Calu3 (cell line): ENCODE measurements at regions of chr1 and their contacts with region 1.

Region 1: GRCh38 chr1:214123061-214123784 is 135.4 kb downstream of the PROX1 start:
- DNase-seq: peak; percentile 65
- H3K4me3 Mint-ChIP-seq: no peak overlapping the region
- H3K27ac Mint-ChIP-seq: no peak overlapping the region
- H3K4me1 Mint-ChIP-seq: peaks cover 12% of the 10 kb centered on the region
- H3K27me3 Mint-ChIP-seq: peaks cover 2% of the 10 kb centered on the region
- CTCF ChIP-seq: peak; percentile 42

Region 2: DNA sequence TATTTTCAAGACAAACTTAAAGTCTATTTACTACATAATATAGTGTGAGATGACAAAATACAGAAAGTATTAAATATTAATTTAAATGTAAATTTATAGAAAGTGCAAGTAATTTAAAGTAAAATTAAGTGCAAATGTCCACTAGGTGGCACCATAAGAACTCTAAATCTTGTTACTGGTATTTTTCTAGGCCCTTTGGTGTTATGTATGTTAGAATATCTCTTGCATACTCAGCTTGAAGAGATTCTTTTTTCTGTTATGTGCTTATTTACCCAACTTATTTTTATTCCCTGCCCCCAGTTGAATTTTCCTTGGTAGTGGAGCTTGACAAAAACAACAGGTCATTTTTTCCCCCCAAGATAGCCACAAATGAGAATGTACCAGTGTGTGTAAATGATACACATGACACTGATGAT is 1000.7 kb before region 1 on chr1:
- CTCF ChIA-PET with region 1: interaction called, 4 read pairs
- intact Hi-C with region 1: loop called (anchors 1 kb)
- DNase-seq: peak; percentile 20
- H3K4me3 Mint-ChIP-seq: no peak overlapping the region
- H3K27ac Mint-ChIP-seq: no peak overlapping the region
- H3K4me1 Mint-ChIP-seq: peaks cover 53% of the 10 kb centered on the region
- H3K27me3 Mint-ChIP-seq: no peaks in the 10 kb centered on the region
- CTCF ChIP-seq: peak; percentile 37

Region 3: DNA sequence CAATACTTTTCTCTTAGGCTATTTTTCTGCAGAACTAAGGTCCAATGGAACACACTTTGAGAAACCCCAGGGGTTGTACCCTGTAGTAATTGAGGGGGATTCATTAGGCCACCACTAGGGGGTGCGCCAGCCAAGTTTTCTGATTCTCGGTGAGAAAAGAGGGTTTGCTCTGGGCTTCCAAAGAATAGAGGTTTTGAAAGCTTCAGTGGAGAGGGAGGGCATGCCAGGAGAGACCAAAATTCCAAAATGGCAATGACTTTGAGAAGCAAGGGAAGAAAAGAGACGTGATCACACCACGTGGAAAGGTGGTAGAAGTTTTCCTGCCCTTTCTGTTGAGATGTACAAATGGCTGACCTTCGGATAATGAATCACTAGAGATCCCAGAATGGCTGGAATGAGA is 748.9 kb before region 1 on chr1:
- CTCF ChIA-PET with region 1: interaction called, 3 read pairs
- intact Hi-C with region 1: loop called (anchors 1 kb)
- DNase-seq: peak; percentile 90
- H3K4me3 Mint-ChIP-seq: no peak overlapping the region
- H3K27ac Mint-ChIP-seq: no peak overlapping the region
- H3K4me1 Mint-ChIP-seq: peaks cover 10% of the 10 kb centered on the region
- H3K27me3 Mint-ChIP-seq: no peaks in the 10 kb centered on the region
- CTCF ChIP-seq: peak; percentile 83

Region 4: GRCh38 chr1:213658457-213658856 is 464.8 kb before region 1 on chr1:
- CTCF ChIA-PET with region 1: no interaction called
- intact Hi-C with region 1: loop called (anchors 10 kb)
- DNase-seq: no peak
- H3K4me3 Mint-ChIP-seq: no peak overlapping the region
- H3K27ac Mint-ChIP-seq: no peak overlapping the region
- H3K4me1 Mint-ChIP-seq: no peaks in the 10 kb centered on the region
- H3K27me3 Mint-ChIP-seq: peaks cover 15% of the 10 kb centered on the region
- CTCF ChIP-seq: no peak

Region 5: DNA sequence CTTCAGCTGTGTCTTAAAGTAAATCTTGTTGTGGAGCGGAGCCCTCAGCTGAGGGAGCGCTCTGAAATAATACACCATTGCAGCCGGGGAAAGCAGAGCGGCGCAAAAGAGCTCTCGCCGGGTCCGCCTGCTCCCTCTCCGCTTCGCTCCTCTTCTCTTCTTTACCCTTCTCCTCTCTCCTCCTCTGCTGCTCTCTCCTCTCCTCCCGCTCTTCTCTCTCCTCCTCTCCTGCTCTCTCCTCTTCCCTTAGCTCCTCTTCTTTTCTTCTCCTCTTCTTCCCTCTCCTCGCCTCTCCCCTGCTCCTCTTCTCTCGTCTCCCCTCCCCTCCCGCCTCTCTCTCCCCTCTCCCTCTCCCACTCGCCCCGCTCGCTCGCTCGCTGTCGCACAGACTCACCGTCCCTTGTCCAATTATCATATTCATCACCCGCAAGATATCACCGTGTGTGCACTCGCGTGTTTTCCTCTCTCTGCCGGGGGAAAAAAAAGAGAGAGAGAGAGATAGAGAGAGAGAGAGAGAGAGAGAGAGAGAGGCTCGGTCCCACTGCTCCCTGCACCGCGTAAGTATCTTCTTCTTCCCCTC is 135.2 kb before region 1 on chr1 and contains the start of gene PROX1:
- CTCF ChIA-PET with region 1: interaction called, 8 read pairs
- intact Hi-C with region 1: loop called (anchors 2 kb)
- DNase-seq: peak; percentile 67
- H3K4me3 Mint-ChIP-seq: peak within 1 kb of the TSS; percentile 86
- H3K27ac Mint-ChIP-seq: peak within 1 kb of the TSS; percentile 91
- H3K4me1 Mint-ChIP-seq: peaks cover 14% of the 10 kb centered on the region
- H3K27me3 Mint-ChIP-seq: peaks cover 85% of the 10 kb centered on the region
- CTCF ChIP-seq: no peak
- total RNA-seq, gene PROX1: 0.29 and 0.40 TPM in 2 replicates

Region 6: DNA sequence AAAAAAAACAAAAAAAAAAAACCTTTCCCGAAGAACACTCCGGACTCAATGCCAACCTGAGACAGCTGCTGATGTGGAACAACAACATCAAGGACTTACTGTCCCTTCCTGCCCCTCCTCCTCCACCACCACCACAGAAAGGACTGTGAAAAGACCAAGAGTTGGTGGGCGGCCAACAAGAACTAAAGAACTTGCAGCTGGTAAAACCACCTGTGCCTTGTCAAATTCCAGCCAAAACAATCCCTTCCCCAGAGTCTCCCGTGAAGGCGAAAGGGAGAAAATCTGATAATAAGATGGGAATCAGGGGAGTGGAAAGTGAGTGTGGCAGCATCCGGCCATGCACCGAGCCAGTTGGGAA is 46.5 kb before region 1 on chr1:
- CTCF ChIA-PET with region 1: no interaction called
- intact Hi-C with region 1: no loop called
- DNase-seq: no peak
- H3K4me3 Mint-ChIP-seq: no peak overlapping the region
- H3K27ac Mint-ChIP-seq: no peak overlapping the region
- H3K4me1 Mint-ChIP-seq: no peaks in the 10 kb centered on the region
- H3K27me3 Mint-ChIP-seq: peaks cover 89% of the 10 kb centered on the region
- CTCF ChIP-seq: no peak

Region 7: GRCh38 chr1:214174508-214175199 is 51.4 kb after region 1 on chr1:
- CTCF ChIA-PET with region 1: no interaction called
- intact Hi-C with region 1: no loop called
- DNase-seq: no peak
- H3K4me3 Mint-ChIP-seq: no peak overlapping the region
- H3K27ac Mint-ChIP-seq: no peak overlapping the region
- H3K4me1 Mint-ChIP-seq: no peaks in the 10 kb centered on the region
- H3K27me3 Mint-ChIP-seq: peaks cover 82% of the 10 kb centered on the region
- CTCF ChIP-seq: no peak